Body of pancreas (tissue), 4 donors: ENCODE measurements at regions of chr19 and their contacts with region 1.

Region 1: DNA sequence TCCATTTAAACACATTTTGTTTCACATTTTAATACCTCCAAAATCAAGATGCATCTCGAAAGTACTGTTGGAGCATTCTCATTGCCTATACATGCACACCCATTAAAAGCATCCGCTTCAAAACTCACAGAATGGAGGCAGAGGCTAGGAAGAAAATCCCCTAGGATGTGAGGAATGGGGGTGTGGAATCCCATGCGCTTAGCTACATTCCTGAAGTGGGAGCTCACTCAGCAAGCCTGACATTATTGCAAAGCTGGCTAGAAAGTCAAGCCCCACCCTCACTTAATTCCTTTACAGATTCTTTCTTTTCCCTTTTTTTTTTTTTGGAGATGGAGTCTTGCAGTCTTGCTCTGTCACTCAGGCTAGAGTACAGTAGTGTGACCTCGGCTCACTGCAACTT is 4.6 kb upstream of the FAM32A start:
- DNase-seq: no peak
- ATAC-seq: no peak
- H3K4me3 ChIP-seq: no peak overlapping the region
- H3K27ac ChIP-seq: no peak overlapping the region
- H3K4me1 ChIP-seq: peaks cover 12% of the 10 kb centered on the region
- H3K27me3 ChIP-seq: no peaks in the 10 kb centered on the region
- CTCF ChIP-seq: no peak
- POLR2A ChIP-seq: no peak

Region 2: GRCh38 chr19:15631817-15632216 is 548.8 kb before region 1 on chr19:
- intact Hi-C with region 1: loop called (anchors 5 kb)
- DNase-seq: no peak
- ATAC-seq: no peak
- H3K4me3 ChIP-seq: no peak overlapping the region
- H3K27ac ChIP-seq: no peak overlapping the region
- H3K4me1 ChIP-seq: no peaks in the 10 kb centered on the region
- H3K27me3 ChIP-seq: peaks cover 0 to 5% of the 10 kb centered on the region in 2 donors
- CTCF ChIP-seq: peak in 1 of 7 experiments; percentile 13
- POLR2A ChIP-seq: no peak

Region 3: GRCh38 chr19:16041299-16041990 is 139.2 kb before region 1 on chr19:
- intact Hi-C with region 1: loop called (anchors 2 kb)
- DNase-seq: peak; percentile 77 to 84 (median 82)
- ATAC-seq: peak; percentile 90
- H3K4me3 ChIP-seq: no peak overlapping the region
- H3K27ac ChIP-seq: no peak overlapping the region
- H3K4me1 ChIP-seq: peaks cover 7% of the 10 kb centered on the region
- H3K27me3 ChIP-seq: no peaks in the 10 kb centered on the region
- CTCF ChIP-seq: peak; percentile 90 to 100 (median 94)
- POLR2A ChIP-seq: no peak

Region 4: GRCh38 chr19:16125737-16126495 is 54.7 kb before region 1 on chr19:
- intact Hi-C with region 1: no loop called
- DNase-seq: no peak
- ATAC-seq: no peak
- H3K4me3 ChIP-seq: no peak overlapping the region
- H3K27ac ChIP-seq: no peak overlapping the region
- H3K4me1 ChIP-seq: no peaks in the 10 kb centered on the region
- H3K27me3 ChIP-seq: no peaks in the 10 kb centered on the region
- CTCF ChIP-seq: no peak
- POLR2A ChIP-seq: no peak

Region 5: DNA sequence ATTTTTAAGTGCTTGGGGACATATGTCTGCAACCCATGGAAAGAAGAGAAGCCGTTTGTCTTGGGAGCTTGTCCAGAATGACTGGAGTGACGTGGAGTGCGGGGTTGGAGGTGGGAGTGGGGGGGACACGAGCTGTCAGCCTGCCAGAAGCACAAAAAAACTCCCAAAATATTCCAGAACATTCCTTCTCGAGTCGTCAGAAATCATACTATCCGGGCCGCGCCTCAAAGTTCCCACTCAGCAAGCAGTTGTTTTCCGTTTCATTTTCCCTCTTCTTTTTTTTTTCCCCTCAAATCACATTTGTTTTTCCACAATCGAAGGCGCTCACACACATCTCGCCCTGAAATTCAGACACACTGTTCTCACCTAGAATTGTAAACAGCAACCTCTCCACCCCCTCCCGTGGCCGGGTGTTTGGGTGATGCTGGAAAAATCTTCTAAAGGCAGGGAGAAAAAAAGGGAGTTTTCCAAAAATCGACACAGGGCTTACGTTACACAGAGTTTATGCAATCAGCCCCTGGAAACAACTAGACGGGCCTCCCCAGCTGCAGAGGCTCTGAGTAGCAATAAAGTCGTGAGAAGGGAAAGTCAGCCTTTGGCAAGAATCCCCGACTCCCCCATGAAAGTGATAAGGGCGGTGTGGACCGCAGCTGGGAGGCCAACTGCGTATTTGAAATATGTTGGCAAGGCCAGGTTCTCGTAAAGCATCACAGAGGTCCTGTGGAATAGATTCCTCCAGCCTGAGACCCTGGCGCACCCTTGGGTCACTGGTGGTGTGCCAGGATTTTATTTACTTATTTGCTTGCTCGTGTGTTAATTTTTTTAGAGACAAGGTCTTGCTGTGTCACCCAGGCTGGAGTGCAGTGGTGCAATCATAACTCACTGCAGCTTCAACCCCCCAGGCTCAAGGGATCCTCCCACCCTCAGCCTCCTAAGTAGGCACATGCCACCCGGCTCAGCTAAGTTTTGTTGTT is 112.8 kb after region 1 on chr19:
- intact Hi-C with region 1: no loop called
- DNase-seq: peak; percentile 47 to 75 (median 68)
- ATAC-seq: peak; percentile 80
- H3K4me3 ChIP-seq: no peak overlapping the region
- H3K27ac ChIP-seq: peak overlapping the region; percentile 25 to 79 (median 72)
- H3K4me1 ChIP-seq: peaks cover 18% of the 10 kb centered on the region
- H3K27me3 ChIP-seq: no peaks in the 10 kb centered on the region
- CTCF ChIP-seq: no peak
- POLR2A ChIP-seq: peak in 1 of 3 donors; percentile 24